ENCODE measurements at regions of chr5 and their contacts with region 1.

Region 1: DNA sequence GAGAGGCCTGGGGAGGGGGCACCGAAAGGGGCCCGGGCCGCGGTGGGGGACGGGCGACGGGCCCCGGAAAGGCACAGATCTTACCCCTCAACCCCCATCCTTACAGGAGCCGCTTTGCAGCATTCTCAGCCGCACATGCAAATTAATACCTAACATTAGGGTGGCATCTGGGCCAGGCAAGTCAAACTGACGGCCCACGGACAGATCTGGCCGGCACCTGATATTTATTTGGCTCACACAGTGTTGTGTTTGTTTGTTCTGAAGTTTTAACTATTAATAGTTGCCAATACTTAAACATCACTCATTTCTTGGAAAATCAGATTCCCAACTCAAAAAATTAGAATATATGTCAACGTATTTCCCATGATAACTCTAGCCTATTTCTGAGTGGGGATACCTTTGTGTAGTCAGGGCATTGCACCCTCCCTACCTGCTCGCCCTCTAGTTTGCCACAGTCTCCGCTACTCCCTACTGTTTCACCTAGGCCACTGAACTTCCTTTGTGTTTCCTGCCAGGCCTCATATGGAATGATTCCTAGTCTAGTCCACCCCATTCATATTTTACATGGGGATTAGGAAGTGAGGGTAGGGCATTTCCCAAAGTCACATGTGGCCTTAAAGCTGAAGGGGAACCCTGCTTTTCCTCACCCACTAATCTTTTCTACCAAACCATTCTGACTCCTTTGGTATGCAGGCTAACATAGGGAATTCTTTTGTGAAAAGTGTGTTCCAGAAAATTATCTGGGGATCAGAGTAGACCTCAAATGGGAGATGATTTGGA is 71.9 kb upstream of the LARP1 start:
- DNase-seq: no peak
- H3K4me3 ChIP-seq: peak overlapping the region; percentile 53; the same call in 1 of the 2 replicates
- H3K27ac ChIP-seq: peak overlapping the region; percentile 41
- H3K4me1 ChIP-seq: peaks cover 10% of the 10 kb centered on the region; the same call in 1 of the 2 replicates
- H3K27me3 ChIP-seq: no peaks in the 10 kb centered on the region
- CTCF ChIP-seq: no peak

Region 2: DNA sequence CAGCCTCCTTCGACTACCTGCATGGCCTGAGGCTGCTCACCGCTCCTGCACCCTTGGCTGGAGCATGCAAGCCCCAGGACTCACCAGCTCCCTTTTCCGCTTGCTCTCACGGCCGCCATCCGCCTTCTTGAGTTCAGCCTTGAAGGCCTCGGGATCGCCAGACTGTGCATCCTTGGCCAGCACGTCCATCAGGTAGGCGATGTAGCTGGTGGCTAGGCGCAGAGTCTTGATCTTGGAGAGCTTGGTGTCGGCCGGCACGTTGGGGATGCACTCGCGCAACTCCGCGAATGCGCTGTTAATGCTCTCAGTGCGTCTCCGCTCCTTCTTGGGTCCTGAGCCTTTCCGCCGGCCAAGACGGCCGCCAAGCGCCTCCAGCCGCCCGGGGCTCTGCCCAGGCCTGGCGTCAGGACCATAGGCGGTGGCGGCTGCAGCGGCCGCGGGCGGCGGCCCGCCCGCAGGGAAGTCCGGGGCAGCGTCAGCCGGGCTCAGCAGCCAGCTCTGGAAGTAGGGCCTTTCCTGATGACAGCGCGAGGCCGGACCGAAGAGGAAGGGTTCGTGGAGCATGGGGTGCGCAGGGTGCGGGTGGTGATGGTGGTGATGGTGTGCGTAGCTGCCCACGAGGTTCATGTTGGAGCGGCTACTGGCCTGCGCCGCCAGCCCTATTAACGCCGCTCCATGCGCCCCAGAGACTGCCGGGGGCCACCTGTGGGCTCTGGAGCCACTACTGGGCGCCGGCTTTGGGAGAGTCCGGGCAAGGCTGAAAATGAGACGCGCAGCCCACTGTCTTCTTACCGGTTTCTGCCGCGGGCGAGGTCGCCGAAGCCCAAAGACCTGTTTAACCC is 205.7 kb before region 1 on chr5:
- CTCF ChIA-PET with region 1: interaction called, 10 read pairs
- POLR2A ChIA-PET with region 1: no interaction called
- intact Hi-C with region 1: no loop called
- DNase-seq: no peak
- H3K4me3 ChIP-seq: no peak overlapping the region
- H3K27ac ChIP-seq: no peak overlapping the region
- H3K4me1 ChIP-seq: no peaks in the 10 kb centered on the region
- H3K27me3 ChIP-seq: peaks cover 48% of the 10 kb centered on the region
- CTCF ChIP-seq: no peak

Region 3: GRCh38 chr5:154714266-154714986 is 31.1 kb after region 1 on chr5:
- CTCF ChIA-PET with region 1: interaction called, 25 read pairs
- POLR2A ChIA-PET with region 1: interaction called, 14 read pairs
- intact Hi-C with region 1: loop called (anchors 2 kb)
- DNase-seq: peak in 1 of 2 experiments; percentile 20
- H3K4me3 ChIP-seq: no peak overlapping the region
- H3K27ac ChIP-seq: peak overlapping the region; percentile 46; the same call in 1 of the 2 replicates
- H3K4me1 ChIP-seq: peaks cover 28% of the 10 kb centered on the region
- H3K27me3 ChIP-seq: no peaks in the 10 kb centered on the region
- CTCF ChIP-seq: no peak

Region 4: GRCh38 chr5:154754460-154755360 is 71.4 kb after region 1 on chr5:
- CTCF ChIA-PET with region 1: no interaction called
- POLR2A ChIA-PET with region 1: no interaction called
- intact Hi-C with region 1: loop called (anchors 1 kb)
- DNase-seq: peak; percentile 96 to 100
- H3K4me3 ChIP-seq: peak overlapping the region; percentile 77
- H3K27ac ChIP-seq: peak overlapping the region; percentile 95
- H3K4me1 ChIP-seq: peaks cover 33% of the 10 kb centered on the region
- H3K27me3 ChIP-seq: no peaks in the 10 kb centered on the region
- CTCF ChIP-seq: no peak; the same call in 1 of the 2 replicates

Region 5: GRCh38 chr5:154857530-154858296 is 174.4 kb after region 1 on chr5:
- CTCF ChIA-PET with region 1: no interaction called
- POLR2A ChIA-PET with region 1: no interaction called
- intact Hi-C with region 1: loop called (anchors 1 kb)
- DNase-seq: peak; percentile 88 to 94
- H3K4me3 ChIP-seq: peak overlapping the region; percentile 88
- H3K27ac ChIP-seq: peak overlapping the region; percentile 84
- H3K4me1 ChIP-seq: peaks cover 24% of the 10 kb centered on the region
- H3K27me3 ChIP-seq: no peaks in the 10 kb centered on the region
- CTCF ChIP-seq: no peak

Region 6: GRCh38 chr5:154940772-154941620 is 257.7 kb after region 1 on chr5 and contains the start of gene MRPL22:
- CTCF ChIA-PET with region 1: no interaction called
- POLR2A ChIA-PET with region 1: no interaction called
- intact Hi-C with region 1: loop called (anchors 2 kb)
- DNase-seq: peak; percentile 86 to 92
- H3K4me3 ChIP-seq: peak within 1 kb of the TSS; percentile 81
- H3K27ac ChIP-seq: peak within 1 kb of the TSS; percentile 35
- H3K4me1 ChIP-seq: peaks cover 26% of the 10 kb centered on the region; the same call in 1 of the 2 replicates
- H3K27me3 ChIP-seq: no peaks in the 10 kb centered on the region
- CTCF ChIP-seq: no peak
- total RNA-seq, gene MRPL22: 80.8 and 94.0 TPM in 2 replicates